Pancreas (tissue), 10 donors: ENCODE measurements at regions of chr2 and their contacts with region 1.

Region 1: DNA sequence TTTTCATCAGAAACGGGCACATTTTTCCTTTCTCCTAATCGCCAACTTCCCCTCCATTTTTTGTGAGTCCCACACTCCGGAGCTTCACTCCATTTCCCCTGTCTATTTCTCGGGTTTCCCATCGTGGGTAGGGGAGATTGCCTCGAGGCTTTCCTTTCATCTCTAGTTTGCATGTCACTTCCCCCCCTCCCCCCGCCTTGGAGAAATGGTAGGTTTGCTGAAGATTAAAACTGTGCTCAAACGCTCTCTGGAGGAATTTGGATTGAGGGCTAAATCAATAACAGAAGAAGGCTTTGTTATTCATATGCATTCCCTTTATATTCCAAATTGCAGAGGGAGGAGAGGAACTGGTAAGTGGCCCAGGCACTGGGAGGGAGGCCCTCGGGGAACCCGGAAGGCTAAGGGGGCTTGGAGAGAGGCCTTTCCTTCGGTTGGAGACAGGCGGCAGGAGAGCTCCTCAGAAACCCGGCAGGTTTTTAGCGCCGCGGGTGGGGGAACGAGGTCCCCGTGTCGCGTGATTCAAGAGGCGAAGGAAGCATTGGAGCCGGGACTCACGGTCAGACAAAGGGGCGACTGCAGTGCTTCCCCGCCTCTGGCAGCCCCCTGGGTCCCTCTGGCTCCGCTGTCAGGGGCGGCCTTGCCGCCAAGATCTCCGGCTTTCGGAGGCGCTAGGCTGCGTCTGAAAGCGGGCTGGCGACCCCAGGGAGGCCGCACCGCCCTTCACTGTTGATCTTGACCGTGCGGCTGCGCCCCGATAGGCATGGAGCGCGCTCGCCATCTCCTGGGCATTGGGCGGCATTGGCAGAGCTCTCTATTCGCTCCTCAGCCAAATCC is 2.4 kb upstream of the HOXD12 start:
- DNase-seq: peak; percentile 37 to 90 (median 65)
- ATAC-seq: peak; percentile 95 to 98 (median 97)
- H3K4me3 ChIP-seq: peak overlapping the region in 3 of 4 donors; percentile 11 to 49 (median 34)
- H3K27ac ChIP-seq: no peak overlapping the region
- H3K4me1 ChIP-seq: peaks cover 0 to 11% (median 4%) of the 10 kb centered on the region in 3 donors
- H3K27me3 ChIP-seq: peaks cover 6 to 84% (median 40%) of the 10 kb centered on the region in 4 donors
- CTCF ChIP-seq: peak; percentile 78 to 82 (median 80)

Region 2: DNA sequence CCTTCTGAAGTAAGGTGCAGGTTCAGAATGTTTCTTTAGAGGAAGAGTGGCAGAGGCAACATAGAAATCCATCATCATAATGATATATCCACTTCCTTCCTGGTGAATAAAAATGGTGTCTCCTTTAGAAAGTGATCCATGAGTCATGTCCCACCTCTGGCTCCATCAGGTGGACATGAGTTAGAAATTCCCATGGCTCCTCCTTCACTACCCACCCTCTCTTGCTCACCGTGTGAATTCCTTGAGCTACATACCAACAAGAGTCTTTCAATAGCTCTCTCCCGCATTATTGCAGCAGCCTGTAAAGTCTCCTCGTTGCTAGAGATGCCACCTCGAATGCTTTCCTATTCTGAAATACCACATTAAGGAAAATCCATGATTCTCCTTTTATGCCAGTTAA is 412.7 kb before region 1 on chr2:
- intact Hi-C with region 1: loop called in 2 of 3 experiments (anchors 5 kb)
- DNase-seq: no peak
- ATAC-seq: no peak
- H3K4me3 ChIP-seq: no peak overlapping the region
- H3K27ac ChIP-seq: no peak overlapping the region
- H3K4me1 ChIP-seq: no peaks in the 10 kb centered on the region
- H3K27me3 ChIP-seq: peaks cover 0 to 14% (median 0%) of the 10 kb centered on the region in 4 donors
- CTCF ChIP-seq: no peak

Region 3: DNA sequence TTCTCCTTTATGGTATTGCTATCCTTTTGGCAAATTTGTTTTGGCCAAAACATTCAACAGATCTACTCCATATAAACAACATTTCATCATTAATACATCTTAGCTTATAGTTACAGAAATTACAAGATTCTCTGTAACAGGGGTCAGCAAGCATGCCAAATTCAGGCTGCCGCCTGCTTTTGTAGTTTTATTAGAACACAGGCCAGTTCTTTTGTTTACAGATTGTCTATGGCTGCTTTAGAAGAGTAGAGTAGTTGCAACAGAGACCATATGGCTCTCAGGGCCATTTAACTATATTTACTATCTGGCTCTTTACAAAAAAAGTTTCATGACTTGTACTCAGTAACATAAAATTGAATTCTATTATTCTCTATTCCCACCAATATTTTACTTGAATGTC is 149.0 kb before region 1 on chr2:
- intact Hi-C with region 1: no loop called
- DNase-seq: no peak
- ATAC-seq: no peak
- H3K4me3 ChIP-seq: no peak overlapping the region
- H3K27ac ChIP-seq: no peak overlapping the region
- H3K4me1 ChIP-seq: no peaks in the 10 kb centered on the region
- H3K27me3 ChIP-seq: no peaks in the 10 kb centered on the region
- CTCF ChIP-seq: no peak

Region 4: GRCh38 chr2:176473177-176473576 is 376.0 kb after region 1 on chr2:
- intact Hi-C with region 1: no loop called
- DNase-seq: no peak
- ATAC-seq: peak in 1 of 4 donors; percentile 51
- H3K4me3 ChIP-seq: no peak overlapping the region
- H3K27ac ChIP-seq: no peak overlapping the region
- H3K4me1 ChIP-seq: no peaks in the 10 kb centered on the region
- H3K27me3 ChIP-seq: peaks cover 0 to 4% (median 2%) of the 10 kb centered on the region in 4 donors
- CTCF ChIP-seq: no peak

Region 5: DNA sequence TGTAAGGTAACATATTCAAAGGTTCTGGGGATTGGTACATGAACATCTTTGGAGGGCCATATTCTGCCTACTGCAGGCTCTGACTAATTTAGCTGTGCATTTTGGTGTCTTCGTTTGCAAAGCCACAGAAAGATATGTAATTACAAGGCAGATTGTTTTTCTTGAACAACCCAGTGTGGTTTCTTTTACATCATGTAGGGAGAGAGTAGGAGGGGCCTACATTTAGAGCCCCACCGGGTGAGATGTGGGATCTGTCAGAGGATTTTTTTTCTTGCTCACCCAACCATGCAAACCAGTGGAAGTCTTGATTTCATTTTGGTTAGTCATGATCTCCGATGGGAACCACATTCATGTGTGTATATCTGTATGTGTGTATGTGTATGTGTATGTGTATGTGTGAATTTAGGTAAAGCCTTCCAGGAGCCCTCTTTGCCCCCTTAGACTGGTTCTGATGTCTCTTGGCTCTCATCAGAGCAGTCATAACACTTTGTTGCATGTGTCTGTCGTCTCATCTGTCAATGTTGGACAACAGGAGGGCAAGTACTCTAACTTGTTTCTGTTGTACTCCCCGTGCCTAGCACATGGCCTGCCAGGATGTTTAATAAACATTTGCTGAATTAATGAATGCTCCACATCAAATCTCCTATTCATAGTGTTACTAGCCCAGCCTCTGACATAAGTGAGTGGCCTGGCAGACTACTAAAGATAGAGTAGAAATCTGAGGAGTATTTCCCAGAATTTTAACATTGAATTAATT is 412.0 kb after region 1 on chr2:
- intact Hi-C with region 1: no loop called
- DNase-seq: no peak
- ATAC-seq: no peak
- H3K4me3 ChIP-seq: no peak overlapping the region
- H3K27ac ChIP-seq: no peak overlapping the region
- H3K4me1 ChIP-seq: no peaks in the 10 kb centered on the region
- H3K27me3 ChIP-seq: no peaks in the 10 kb centered on the region
- CTCF ChIP-seq: no peak

Region 6: DNA sequence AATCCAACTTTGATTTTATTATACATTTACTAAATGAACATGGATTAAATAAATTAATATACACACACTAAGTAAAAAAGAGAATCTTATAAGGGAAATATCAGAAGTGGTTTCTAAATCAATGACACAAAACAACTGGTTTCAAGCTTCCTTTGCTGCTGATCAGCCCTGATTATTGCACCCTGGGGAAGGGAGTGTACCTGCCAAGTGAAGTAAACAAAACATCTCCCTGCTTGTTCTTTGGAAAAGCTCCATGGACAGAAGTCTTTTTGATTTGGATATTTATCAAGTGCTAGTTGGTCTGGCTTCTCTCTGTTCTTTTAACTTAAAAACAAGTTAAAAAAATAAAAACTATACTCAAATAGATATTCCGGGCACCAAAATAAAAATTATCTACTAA is 1785.3 kb after region 1 on chr2:
- intact Hi-C with region 1: no loop called
- DNase-seq: no peak
- ATAC-seq: no peak
- H3K4me3 ChIP-seq: no peak overlapping the region
- H3K27ac ChIP-seq: no peak overlapping the region
- H3K4me1 ChIP-seq: no peaks in the 10 kb centered on the region
- H3K27me3 ChIP-seq: no peaks in the 10 kb centered on the region
- CTCF ChIP-seq: no peak